ENCODE measurements at regions of chr9 and their contacts with region 1.

Region 1: DNA sequence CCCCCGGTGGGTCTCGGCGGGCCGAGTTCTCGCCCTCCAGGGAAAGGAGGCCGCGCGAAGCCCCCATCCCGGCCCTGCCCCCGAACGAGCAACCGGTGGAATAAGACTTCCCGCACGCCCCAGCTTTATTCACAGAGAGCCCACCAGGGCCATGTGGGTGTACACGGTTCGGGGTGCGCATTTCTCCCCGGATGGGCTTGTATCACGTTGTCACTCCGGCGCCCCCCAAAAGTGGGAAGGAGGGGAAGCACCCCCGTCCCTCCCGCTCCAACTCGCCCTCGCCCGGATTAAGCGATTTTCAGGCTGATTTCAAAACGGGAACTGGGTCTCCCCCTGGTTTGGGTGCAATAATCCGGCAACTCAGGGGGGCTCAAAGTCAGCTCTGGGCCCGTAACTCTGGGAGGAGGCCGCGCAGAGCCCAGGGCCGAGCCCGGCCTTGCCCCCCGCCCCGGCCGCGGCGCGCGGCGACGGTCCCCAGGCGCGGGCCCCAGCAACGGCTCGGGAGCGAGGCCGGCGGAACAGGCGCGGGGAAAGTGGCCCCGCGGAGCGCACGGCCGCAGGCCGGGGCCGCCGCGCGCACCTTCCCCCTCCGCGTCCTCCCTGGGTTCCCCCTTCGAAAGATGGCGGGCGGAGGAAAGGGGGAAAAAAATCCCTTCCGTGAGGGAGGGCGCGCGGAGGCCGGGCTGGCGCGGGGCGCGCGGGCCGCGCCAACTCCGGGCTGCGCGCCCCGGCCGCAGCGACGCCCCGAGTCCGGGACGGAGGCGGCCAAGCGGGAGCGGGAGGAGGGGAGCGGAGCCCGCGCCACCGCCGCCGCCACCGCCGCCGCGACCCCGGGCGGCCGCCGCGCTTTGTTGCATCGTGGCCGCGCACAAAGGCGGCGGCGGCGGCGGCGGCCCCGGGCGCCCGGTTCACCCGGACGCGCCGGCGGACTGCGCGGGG is 644 bp downstream of the BRD3 start:
- DNase-seq: no peak
- H3K4me3 ChIP-seq: peak overlapping the region; percentile 52 to 100 (median 92)
- H3K27ac ChIP-seq: peak overlapping the region; percentile 65
- H3K4me1 ChIP-seq: peaks cover 0 to 15% (median 8%) of the 10 kb centered on the region in 4 experiments; a peak in 5 of 7 replicates
- H3K27me3 ChIP-seq: peaks cover 0 to 13% (median 10%) of the 10 kb centered on the region in 4 experiments; a peak in 3 of 7 replicates
- CTCF ChIP-seq: no peak
- EP300 ChIP-seq: no peak
- POLR2A ChIP-seq: peak in 1 of 2 experiments; percentile 41; a peak in 2 of 3 replicates
- RAD21 ChIP-seq: no peak

Region 2: GRCh38 chr9:134010310-134011173 is 56.6 kb before region 1 on chr9:
- CTCF ChIA-PET with region 1: no interaction called
- POLR2A ChIA-PET with region 1: no interaction called
- DNase-seq: no peak
- H3K4me3 ChIP-seq: no peak overlapping the region
- H3K27ac ChIP-seq: no peak overlapping the region
- H3K4me1 ChIP-seq: no peaks in the 10 kb centered on the region
- H3K27me3 ChIP-seq: peaks cover 0 to 2% (median 0%) of the 10 kb centered on the region in 4 experiments; a peak in 1 of 7 replicates
- CTCF ChIP-seq: no peak
- EP300 ChIP-seq: no peak
- POLR2A ChIP-seq: no peak
- RAD21 ChIP-seq: no peak

Region 3: GRCh38 chr9:134055981-134056461 is 11.2 kb before region 1 on chr9:
- CTCF ChIA-PET with region 1: interaction called, 8 read pairs
- POLR2A ChIA-PET with region 1: interaction called, 19 read pairs
- DNase-seq: no peak
- H3K4me3 ChIP-seq: no peak overlapping the region
- H3K27ac ChIP-seq: no peak overlapping the region
- H3K4me1 ChIP-seq: peaks cover 0 to 12% (median 2%) of the 10 kb centered on the region in 4 experiments; a peak in 4 of 7 replicates
- H3K27me3 ChIP-seq: no peaks in the 10 kb centered on the region
- CTCF ChIP-seq: no peak
- EP300 ChIP-seq: no peak
- POLR2A ChIP-seq: no peak
- RAD21 ChIP-seq: no peak

Region 4: GRCh38 chr9:134099123-134099787 is 32.1 kb after region 1 on chr9:
- CTCF ChIA-PET with region 1: interaction called, 10 read pairs
- POLR2A ChIA-PET with region 1: interaction called, 3 read pairs
- DNase-seq: peak; percentile 39 to 92
- H3K4me3 ChIP-seq: no peak overlapping the region
- H3K27ac ChIP-seq: no peak overlapping the region
- H3K4me1 ChIP-seq: no peaks in the 10 kb centered on the region
- H3K27me3 ChIP-seq: peaks cover 0 to 3% (median 0%) of the 10 kb centered on the region in 4 experiments; a peak in 1 of 7 replicates
- CTCF ChIP-seq: peak; percentile 14 to 91 (median 70)
- EP300 ChIP-seq: no peak
- POLR2A ChIP-seq: no peak
- RAD21 ChIP-seq: peak; percentile 86 to 90

Region 5: DNA sequence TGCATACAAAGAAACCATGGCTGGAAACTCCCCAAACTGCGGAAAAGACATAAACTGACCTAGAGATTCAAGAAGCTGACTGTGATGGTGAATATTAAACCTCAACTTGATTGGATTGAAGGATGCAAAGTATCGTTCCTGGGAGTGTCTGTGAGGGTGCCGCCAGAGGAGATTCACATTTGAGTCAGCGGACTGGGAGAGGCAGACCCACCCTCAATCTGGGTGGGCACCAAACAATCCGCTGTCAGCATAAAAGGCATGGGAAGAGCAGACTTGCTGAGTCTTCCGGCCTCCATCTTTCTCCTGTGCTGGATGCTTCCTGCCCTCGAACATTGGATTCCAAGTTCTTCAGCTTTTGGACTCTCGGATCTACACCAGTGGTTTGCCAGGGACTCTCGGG is 43.9 kb after region 1 on chr9:
- CTCF ChIA-PET with region 1: no interaction called
- POLR2A ChIA-PET with region 1: no interaction called
- DNase-seq: no peak
- H3K4me3 ChIP-seq: no peak overlapping the region
- H3K27ac ChIP-seq: no peak overlapping the region
- H3K4me1 ChIP-seq: no peaks in the 10 kb centered on the region
- H3K27me3 ChIP-seq: no peaks in the 10 kb centered on the region
- CTCF ChIP-seq: no peak
- EP300 ChIP-seq: no peak
- POLR2A ChIP-seq: no peak
- RAD21 ChIP-seq: no peak

Region 6: DNA sequence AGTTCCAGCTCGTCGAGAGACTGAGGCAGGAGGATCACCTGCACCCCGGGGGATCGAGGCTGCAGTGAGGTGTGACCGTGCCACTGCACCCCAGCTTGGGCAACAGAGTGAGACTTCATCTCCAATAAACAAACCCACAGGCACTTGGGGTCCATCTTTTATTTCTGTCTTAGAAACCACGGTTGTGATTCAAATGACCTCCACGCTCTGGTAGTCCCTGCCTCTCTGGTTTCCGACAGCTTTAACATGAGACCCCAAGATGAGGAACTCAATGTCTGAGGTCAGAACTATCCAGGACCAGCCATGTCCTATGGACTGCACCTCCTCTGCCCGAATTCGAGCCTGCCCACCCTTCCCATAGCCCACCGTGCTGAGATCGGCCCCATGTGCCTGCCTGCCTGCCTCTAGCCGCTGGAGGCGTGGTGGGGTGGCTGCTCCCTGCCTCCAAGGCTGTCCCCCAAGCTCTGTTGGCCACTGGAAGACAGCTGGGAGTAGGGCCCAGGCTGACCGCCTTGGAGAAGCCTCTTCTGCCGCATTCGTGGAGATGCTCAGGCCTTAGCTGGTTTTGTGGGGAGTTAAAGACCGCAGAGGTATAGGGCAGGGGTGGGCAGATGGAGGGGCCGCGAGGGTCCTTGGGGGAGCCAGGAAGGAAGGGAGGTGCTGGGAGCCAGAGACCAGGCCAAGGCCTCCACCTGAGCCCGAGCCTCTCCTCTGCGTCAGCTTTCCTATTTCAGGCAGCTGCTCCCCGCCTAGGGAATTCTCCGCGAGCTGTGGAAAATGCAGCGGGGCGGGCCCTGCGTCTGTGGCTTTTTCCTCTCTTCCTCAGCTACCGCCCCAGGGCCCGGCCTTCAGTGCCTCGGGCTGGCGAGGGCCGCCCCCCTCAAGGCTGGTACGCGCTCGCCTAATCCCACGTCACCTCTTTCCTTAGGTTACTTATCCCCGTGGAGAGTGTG is 61.8 kb after region 1 on chr9:
- CTCF ChIA-PET with region 1: no interaction called
- POLR2A ChIA-PET with region 1: interaction called, 15 read pairs
- DNase-seq: no peak
- H3K4me3 ChIP-seq: no peak overlapping the region
- H3K27ac ChIP-seq: no peak overlapping the region
- H3K4me1 ChIP-seq: peaks cover 5 to 17% (median 12%) of the 10 kb centered on the region in 4 experiments
- H3K27me3 ChIP-seq: no peaks in the 10 kb centered on the region
- CTCF ChIP-seq: no peak
- EP300 ChIP-seq: no peak
- POLR2A ChIP-seq: no peak
- RAD21 ChIP-seq: no peak

Region 7: DNA sequence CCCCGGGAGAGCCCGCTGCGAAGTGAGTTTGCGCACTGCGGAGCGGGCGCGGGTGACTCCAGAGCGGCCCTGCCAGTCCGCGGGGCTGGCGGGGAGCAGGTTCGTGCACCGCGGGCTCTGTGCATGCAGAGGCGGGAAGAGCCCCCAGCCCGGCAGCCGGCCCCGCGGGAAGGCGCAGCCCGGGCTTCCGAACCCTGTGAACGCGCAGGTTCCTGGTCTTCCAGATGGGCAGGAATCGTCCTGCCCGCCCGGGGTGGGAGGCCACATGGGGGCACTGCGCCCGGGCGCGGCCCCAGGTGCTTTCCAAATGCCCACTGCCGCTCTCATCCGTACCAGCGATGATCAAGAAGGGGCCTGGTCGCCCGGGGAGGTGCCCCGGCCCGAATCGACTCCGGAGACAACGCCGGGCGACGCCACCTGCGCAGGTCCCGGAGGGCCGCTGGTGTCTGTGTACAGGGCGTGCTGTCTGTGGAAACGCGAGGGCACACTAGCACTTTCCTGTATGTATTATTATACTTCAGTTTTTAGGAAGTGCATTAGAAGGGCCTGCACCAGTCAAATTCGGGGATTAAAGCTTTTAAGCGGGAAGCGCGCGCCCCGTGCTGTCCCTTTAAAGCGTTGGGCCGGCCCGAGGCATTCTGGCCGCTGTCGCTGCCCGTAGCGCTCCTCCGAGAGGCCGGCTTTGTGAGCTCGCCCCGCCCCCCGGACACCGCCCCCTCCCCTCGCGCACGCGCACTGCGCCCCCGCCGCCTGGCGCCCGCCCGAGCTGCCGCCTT is 68.3 kb after region 1 on chr9 and contains the start of gene WDR5:
- CTCF ChIA-PET with region 1: no interaction called
- POLR2A ChIA-PET with region 1: interaction called, 15 read pairs
- DNase-seq: peak; percentile 43 to 93
- H3K4me3 ChIP-seq: peak within 1 kb of the TSS; percentile 77 to 95 (median 88)
- H3K27ac ChIP-seq: peak within 1 kb of the TSS; percentile 88
- H3K4me1 ChIP-seq: peaks cover 8 to 30% (median 20%) of the 10 kb centered on the region in 4 experiments
- H3K27me3 ChIP-seq: no peaks in the 10 kb centered on the region
- CTCF ChIP-seq: no peak
- EP300 ChIP-seq: no peak
- POLR2A ChIP-seq: peak in 1 of 2 experiments; percentile 22; a peak in 1 of 3 replicates
- RAD21 ChIP-seq: no peak
- total RNA-seq, gene WDR5: 68.1 and 69.7 TPM in 2 replicates